ENCODE measurements at regions of chr10 and their contacts with region 1.

Region 1: DNA sequence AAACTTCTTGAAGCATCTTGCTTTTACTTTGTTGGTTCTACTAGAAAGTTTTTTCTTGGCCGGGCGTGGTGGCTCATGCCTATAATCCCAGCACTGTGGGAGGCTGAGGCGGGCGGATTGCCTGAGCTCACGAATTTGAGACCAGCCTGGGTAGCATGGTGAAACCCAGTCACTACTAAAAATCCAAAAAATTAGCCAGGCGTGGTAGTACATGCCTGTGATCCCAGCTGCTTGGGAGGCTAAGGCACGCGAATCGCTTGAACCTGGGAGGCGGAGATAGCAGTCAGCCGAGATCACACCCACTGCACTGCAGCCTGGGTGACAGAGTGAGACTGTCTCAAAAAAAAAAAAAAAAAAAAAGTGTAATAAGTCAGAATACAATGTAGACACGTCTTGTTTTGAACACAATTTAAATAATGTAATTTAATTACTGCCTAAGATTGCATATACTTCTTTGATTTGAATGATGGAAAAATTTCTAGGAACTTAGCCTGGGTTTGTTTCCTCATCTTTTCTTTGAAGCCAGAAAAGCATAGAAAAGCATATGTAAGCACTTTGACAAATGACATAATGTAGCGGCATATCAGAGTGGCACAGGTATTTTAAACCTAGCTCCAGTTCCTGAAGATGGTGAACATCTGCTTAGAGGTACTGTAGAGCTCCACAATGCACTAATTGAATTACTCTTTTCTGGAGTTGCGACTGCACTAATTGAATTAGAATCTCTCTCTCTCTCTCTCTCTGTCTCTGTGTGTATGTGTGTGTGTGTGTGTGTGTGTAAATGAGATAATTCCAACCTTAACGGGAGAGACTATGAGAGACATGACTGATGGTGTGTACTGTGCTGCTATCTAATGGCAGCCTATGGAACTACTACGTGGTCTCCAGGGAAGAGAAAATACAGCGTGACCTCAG is 87.8 kb downstream of the BTRC start:
- DNase-seq: peak; percentile 73
- ATAC-seq: peak; percentile 96
- H3K4me3 ChIP-seq: no peak overlapping the region
- H3K27ac ChIP-seq: no peak overlapping the region
- H3K4me1 ChIP-seq: no peaks in the 10 kb centered on the region
- H3K27me3 ChIP-seq: no peaks in the 10 kb centered on the region
- CTCF ChIP-seq: peak; percentile 85
- EP300 ChIP-seq: no peak
- POLR2A ChIP-seq: no peak
- RAD21 ChIP-seq: peak; percentile 62; the same call in 1 of the 2 replicates

Region 2: GRCh38 chr10:101291331-101292193 is 150.2 kb before region 1 on chr10:
- CTCF ChIA-PET with region 1: interaction called, 12 read pairs
- POLR2A ChIA-PET with region 1: no interaction called
- in situ Hi-C with region 1: no loop called
- intact Hi-C with region 1: loop called (anchors 5 kb)
- DNase-seq: peak; percentile 30
- ATAC-seq: peak; percentile 87
- H3K4me3 ChIP-seq: peak overlapping the region; percentile 51 to 73 (median 57)
- H3K27ac ChIP-seq: no peak overlapping the region
- H3K4me1 ChIP-seq: peaks cover 24% of the 10 kb centered on the region
- H3K27me3 ChIP-seq: peaks cover 5 to 75% of the 10 kb centered on the region in 2 experiments
- CTCF ChIP-seq: peak; percentile 83
- EP300 ChIP-seq: no peak
- POLR2A ChIP-seq: no peak
- RAD21 ChIP-seq: peak; percentile 77

Region 3: GRCh38 chr10:101301249-101301711 is 140.5 kb before region 1 on chr10:
- CTCF ChIA-PET with region 1: interaction called, 7 read pairs
- POLR2A ChIA-PET with region 1: interaction called, 4 read pairs
- in situ Hi-C with region 1: loop called (anchors 10 kb)
- intact Hi-C with region 1: loop called (anchors 1 kb)
- DNase-seq: peak; percentile 51
- ATAC-seq: peak; percentile 91
- H3K4me3 ChIP-seq: no peak overlapping the region
- H3K27ac ChIP-seq: no peak overlapping the region
- H3K4me1 ChIP-seq: no peaks in the 10 kb centered on the region
- H3K27me3 ChIP-seq: peaks cover 2 to 56% of the 10 kb centered on the region in 2 experiments; a peak in 3 of 5 replicates
- CTCF ChIP-seq: peak; percentile 87
- EP300 ChIP-seq: no peak
- POLR2A ChIP-seq: no peak
- RAD21 ChIP-seq: peak; percentile 79

Region 4: GRCh38 chr10:101468159-101468558 is 26.4 kb after region 1 on chr10:
- CTCF ChIA-PET with region 1: no interaction called
- POLR2A ChIA-PET with region 1: no interaction called
- in situ Hi-C with region 1: no loop called
- intact Hi-C with region 1: no loop called
- DNase-seq: no peak
- ATAC-seq: no peak
- H3K4me3 ChIP-seq: no peak overlapping the region
- H3K27ac ChIP-seq: no peak overlapping the region
- H3K4me1 ChIP-seq: no peaks in the 10 kb centered on the region
- H3K27me3 ChIP-seq: no peaks in the 10 kb centered on the region; a peak in 1 of 5 replicates
- CTCF ChIP-seq: no peak
- EP300 ChIP-seq: no peak
- POLR2A ChIP-seq: no peak
- RAD21 ChIP-seq: no peak

Measured in HepG2 (cell line).